OCI-LY7 (cell line): ENCODE measurements at regions of chr3 and their contacts with region 1.

Region 1: DNA sequence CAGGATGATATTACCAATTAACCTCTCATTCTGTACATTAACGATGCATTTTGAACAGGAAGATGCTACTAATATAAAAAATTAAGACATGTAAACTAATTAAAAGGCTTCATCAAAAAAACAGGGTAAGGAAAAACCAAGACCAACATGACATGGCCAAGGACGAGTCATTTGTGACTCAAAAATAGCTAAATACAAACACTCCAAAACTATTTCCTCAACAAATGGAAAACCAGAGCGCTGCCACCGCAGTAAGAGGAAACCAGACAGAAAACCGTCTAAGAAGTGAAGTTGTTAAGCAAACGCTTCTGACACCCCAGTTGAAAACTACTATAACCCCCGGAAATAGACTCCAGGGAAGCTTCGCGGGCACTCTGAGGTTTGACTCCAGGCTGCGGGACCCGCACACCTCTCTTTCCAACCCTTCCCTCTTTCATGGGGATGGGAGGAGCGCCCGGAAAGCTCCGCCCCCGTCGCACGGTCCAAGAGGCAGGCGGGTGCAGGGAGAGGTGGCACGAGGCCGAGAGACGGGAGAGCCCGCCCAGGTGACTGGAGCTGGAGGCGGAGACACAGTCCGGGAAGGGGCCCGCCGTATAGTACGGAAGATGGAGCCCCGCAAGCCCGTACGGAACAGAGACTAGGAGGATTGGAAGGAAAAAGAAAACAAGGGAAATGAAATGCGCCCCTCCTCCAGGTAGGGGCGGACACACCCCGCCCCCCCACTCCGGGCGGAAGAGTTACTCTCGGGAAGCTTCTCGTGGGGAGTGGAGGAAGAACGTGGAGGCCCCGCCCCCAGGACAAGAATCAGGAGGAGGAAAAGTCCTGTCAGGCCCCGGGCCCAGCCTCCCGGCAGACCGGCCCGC is 708 bp downstream of the DCAF1 start:
- DNase-seq: peak; percentile 88
- H3K4me3 ChIP-seq: peak overlapping the region; percentile 85
- H3K27ac ChIP-seq: peak overlapping the region; percentile 75
- H3K4me1 ChIP-seq: peaks cover 13% of the 10 kb centered on the region
- CTCF ChIP-seq: no peak

Region 2: GRCh38 chr3:50568947-50569749 is 930.0 kb before region 1 on chr3 and contains the start of gene HEMK1:
- CTCF ChIA-PET with region 1: no interaction called
- POLR2A ChIA-PET with region 1: no interaction called
- intact Hi-C with region 1: loop called (anchors 2 kb)
- DNase-seq: peak; percentile 97
- H3K4me3 ChIP-seq: peak within 1 kb of the TSS; percentile 95
- H3K27ac ChIP-seq: peak within 1 kb of the TSS; percentile 55
- H3K4me1 ChIP-seq: peaks cover 25% of the 10 kb centered on the region
- CTCF ChIP-seq: no peak
- total RNA-seq, gene HEMK1: 18.9 and 19.3 TPM in 2 replicates

Region 3: DNA sequence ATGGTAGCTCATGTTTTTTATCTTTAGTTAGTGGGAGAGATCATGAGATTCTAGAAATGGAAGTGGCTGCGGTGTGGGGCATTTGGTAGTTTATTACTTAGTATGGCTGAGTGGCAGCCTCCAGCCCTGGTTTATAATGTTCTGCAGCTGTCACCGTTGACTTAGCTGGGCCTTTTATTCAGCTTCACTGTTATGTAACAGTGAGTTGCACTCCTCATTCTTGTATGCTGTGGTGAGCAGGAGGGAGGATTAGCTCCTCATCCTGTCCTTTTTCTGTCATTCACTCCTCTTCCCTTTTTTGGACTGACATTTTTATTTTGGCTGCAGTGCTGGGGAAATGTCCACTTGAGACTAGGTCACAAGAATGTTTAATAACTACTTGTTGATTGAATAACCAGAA is 68.9 kb after region 1 on chr3:
- CTCF ChIA-PET with region 1: no interaction called
- POLR2A ChIA-PET with region 1: interaction called, 12 read pairs
- intact Hi-C with region 1: no loop called
- DNase-seq: no peak
- H3K4me3 ChIP-seq: no peak overlapping the region
- H3K27ac ChIP-seq: no peak overlapping the region
- H3K4me1 ChIP-seq: no peaks in the 10 kb centered on the region
- CTCF ChIP-seq: no peak

Region 4: GRCh38 chr3:51670823-51671733 is 172.0 kb after region 1 on chr3 and contains the start of gene TEX264:
- CTCF ChIA-PET with region 1: interaction called, 8 read pairs
- POLR2A ChIA-PET with region 1: interaction called, 25 read pairs
- intact Hi-C with region 1: loop called (anchors 1 kb)
- DNase-seq: peak; percentile 93
- H3K4me3 ChIP-seq: peak within 1 kb of the TSS; percentile 95
- H3K27ac ChIP-seq: peak within 1 kb of the TSS; percentile 72
- H3K4me1 ChIP-seq: peaks cover 36% of the 10 kb centered on the region
- CTCF ChIP-seq: no peak
- total RNA-seq, gene TEX264: 42.4 and 50.3 TPM in 2 replicates

Region 5: GRCh38 chr3:51799879-51800749 is 301.0 kb after region 1 on chr3:
- CTCF ChIA-PET with region 1: no interaction called
- POLR2A ChIA-PET with region 1: interaction called, 3 read pairs
- intact Hi-C with region 1: loop called (anchors 2 kb)
- DNase-seq: peak; percentile 62
- H3K4me3 ChIP-seq: no peak overlapping the region
- H3K27ac ChIP-seq: no peak overlapping the region
- H3K4me1 ChIP-seq: no peaks in the 10 kb centered on the region
- CTCF ChIP-seq: peak; percentile 97